Activated T-helper 2 cell treated with anti-CD3 and anti-CD28 coated beads, Interferon-gamma antibody, Interleukin-2, Interleukin-4, amounts not matched to agents 10 μg/mL and 5 μg/mL and 100 μg/mL, durations not matched to agents 14 hours and 24 hours and 36 hours (primary cell): ENCODE measurements at regions of chr11 and their contacts with region 1.

Region 1: DNA sequence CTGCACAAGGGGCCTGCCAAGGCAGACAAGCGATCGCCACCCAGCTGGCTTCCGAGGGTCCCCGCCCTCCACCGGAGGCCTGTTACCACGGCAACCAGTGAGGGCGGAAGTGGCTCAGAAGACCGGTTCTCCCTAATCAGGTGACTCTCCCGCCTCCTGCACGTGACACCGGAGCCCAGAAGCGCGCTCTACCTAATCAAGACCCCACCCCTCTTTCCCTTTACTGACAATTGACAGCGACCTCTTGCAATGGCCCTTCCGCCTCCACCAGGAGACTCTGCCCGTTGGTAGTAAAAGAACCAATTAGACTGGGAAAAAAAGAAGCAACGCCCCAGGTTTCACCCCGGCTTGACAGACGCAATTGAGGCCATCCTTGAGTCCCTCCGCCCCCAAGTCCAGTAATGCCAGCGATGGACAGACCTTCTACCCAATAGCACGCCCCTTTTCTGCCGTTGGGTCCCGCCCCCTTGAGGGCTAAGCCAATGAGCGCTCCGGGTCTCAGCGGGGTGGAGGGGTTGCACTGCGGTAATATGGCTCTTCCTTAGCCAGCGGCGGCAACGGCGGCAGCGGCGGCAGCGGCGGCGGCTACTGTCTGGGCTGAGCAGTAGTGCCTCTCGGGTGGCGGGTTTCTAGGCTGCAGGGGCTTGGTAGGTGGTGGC is at the start of gene UVRAG:
- DNase-seq: peak; percentile 98
- H3K4me3 Mint-ChIP-seq: no peak within 1 kb of the TSS
- H3K27ac Mint-ChIP-seq: peak within 1 kb of the TSS; percentile 92
- H3K4me1 Mint-ChIP-seq: peaks cover 13% of the 10 kb centered on the region
- H3K27me3 Mint-ChIP-seq: no peaks in the 10 kb centered on the region
- total RNA-seq, gene UVRAG: 23.3 and 23.5 TPM in 2 replicates

Region 2: DNA sequence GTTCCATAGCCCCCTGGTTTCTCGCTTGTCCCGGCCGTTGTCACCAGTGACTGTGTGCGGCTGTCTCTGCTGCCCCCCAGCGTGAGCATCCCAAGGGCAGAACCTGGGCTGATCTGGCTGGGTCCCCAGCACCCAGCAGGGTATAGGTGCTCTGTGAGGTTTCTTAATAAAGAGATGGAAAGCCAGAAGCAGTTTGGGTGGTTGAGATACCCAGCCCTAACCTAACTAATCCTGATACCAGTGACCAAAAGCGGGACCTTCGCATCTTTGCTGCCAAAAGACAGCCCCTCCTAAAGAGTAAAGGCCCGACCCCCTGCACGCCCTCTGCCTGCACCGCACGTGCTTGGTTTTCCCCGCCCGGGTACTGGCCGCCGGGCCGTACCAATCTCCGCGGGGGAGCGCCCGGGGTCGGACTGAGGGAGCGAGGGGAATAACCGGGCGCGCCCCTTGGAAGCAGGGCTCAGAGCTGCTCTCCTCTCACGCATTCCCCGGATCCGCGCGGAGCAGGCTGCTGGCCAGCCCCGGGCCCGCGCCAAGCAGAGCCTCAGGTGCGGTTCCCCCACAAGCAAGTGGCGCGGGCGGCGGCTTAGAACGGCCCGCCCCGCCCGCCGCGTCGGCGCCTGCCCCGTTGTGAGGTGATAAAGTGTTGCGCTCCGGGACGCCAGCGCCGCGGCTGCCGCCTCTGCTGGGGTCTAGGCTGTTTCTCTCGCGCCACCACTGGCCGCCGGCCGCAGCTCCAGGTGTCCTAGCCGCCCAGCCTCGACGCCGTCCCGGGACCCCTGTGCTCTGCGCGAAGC is 46.5 kb before region 1 on chr11 and contains the start of gene DGAT2:
- intact Hi-C with region 1: loop called (anchors 2 kb)
- DNase-seq: peak; percentile 68
- H3K4me3 Mint-ChIP-seq: peak within 1 kb of the TSS; percentile 70
- H3K27ac Mint-ChIP-seq: peak within 1 kb of the TSS; percentile 60
- H3K4me1 Mint-ChIP-seq: peaks cover 23% of the 10 kb centered on the region
- H3K27me3 Mint-ChIP-seq: peaks cover 26% of the 10 kb centered on the region
- total RNA-seq, gene DGAT2: 2.6 and 3.0 TPM in 2 replicates